Psoas muscle (tissue), 8 donors: ENCODE measurements at regions of chr2 and their contacts with region 1.

Region 1: GRCh38 chr2:48107326-48107925 is 201.1 kb upstream of the FBXO11 start:
- DNase-seq: no peak
- ATAC-seq: no peak
- H3K4me3 ChIP-seq: peak overlapping the region; percentile 35
- H3K27ac ChIP-seq: peak overlapping the region; percentile 36
- H3K4me1 ChIP-seq: peaks cover 6% of the 10 kb centered on the region
- H3K27me3 ChIP-seq: no peaks in the 10 kb centered on the region
- CTCF ChIP-seq: no peak

Region 2: DNA sequence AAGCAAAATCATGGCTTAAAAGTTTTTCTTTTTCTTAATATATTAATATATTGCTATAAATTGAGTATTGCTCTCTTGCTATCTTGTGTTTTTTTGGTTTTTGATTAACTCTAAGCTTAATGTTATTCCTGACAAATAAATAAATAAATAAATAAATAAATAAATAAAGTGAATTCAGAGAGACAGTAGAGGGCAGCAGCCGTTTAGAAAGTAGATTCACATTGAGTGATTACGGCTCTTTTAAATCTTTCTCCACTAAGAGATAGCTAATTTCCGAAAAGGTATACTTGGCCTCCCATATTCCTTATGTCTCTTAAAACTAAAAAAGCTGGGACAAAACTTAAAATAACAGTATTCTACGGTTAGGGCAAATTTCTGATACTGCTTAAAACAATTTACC is 670.1 kb before region 1 on chr2:
- intact Hi-C with region 1: loop called (anchors 2 to 10 kb)
- DNase-seq: no peak
- ATAC-seq: peak in 3 of 4 donors; percentile 47 to 74 (median 48)
- H3K4me3 ChIP-seq: no peak overlapping the region
- H3K27ac ChIP-seq: no peak overlapping the region
- H3K4me1 ChIP-seq: no peaks in the 10 kb centered on the region
- H3K27me3 ChIP-seq: no peaks in the 10 kb centered on the region
- CTCF ChIP-seq: peak; percentile 59

Region 3: DNA sequence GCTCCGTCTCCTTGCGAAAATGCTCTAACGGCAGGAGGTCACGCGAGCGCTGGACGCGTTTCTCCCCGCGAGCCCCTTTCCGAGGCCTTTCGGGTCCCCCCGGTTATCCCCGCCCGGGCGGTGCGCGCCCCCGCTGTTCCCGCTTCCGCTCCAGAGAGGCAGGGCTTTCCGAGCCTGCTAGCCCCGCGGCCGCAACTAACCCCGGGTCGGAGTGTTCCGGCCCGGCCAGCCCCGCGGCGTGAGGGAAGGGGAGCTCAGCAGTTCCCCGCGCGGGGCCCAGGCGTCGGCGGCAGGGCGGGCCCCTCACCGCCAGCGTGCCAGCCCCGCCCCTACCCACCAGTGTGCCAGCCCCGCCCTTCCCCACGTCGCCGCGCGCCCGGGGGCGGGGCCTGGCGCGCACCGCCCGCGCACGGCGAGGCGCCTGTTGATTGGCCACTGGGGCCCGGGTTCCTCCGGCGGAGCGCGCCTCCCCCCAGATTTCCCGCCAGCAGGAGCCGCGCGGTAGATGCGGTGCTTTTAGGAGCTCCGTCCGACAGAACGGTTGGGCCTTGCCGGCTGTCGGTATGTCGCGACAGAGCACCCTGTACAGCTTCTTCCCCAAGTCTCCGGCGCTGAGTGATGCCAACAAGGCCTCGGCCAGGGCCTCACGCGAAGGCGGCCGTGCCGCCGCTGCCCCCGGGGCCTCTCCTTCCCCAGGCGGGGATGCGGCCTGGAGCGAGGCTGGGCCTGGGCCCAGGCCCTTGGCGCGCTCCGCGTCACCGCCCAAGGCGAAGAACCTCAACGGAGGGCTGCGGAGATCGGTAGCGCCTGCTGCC is 324.5 kb before region 1 on chr2 and contains the start of gene MSH6:
- intact Hi-C with region 1: loop called (anchors 5 kb)
- DNase-seq: peak; percentile 90 to 93
- ATAC-seq: peak; percentile 99 to 100 (median 100)
- H3K4me3 ChIP-seq: peak within 1 kb of the TSS; percentile 97
- H3K27ac ChIP-seq: peak within 1 kb of the TSS; percentile 82
- H3K4me1 ChIP-seq: no peaks in the 10 kb centered on the region
- H3K27me3 ChIP-seq: no peaks in the 10 kb centered on the region
- CTCF ChIP-seq: no peak
- total RNA-seq, gene MSH6: 12.0 to 21.1 (median 17.3) TPM

Region 4: GRCh38 chr2:47862949-47863348 is 244.5 kb before region 1 on chr2:
- intact Hi-C with region 1: loop called in 1 of 2 experiments (anchors 2 kb)
- DNase-seq: no peak
- ATAC-seq: no peak
- H3K4me3 ChIP-seq: no peak overlapping the region
- H3K27ac ChIP-seq: no peak overlapping the region
- H3K4me1 ChIP-seq: peaks cover 10% of the 10 kb centered on the region
- H3K27me3 ChIP-seq: no peaks in the 10 kb centered on the region
- CTCF ChIP-seq: no peak

Region 5: DNA sequence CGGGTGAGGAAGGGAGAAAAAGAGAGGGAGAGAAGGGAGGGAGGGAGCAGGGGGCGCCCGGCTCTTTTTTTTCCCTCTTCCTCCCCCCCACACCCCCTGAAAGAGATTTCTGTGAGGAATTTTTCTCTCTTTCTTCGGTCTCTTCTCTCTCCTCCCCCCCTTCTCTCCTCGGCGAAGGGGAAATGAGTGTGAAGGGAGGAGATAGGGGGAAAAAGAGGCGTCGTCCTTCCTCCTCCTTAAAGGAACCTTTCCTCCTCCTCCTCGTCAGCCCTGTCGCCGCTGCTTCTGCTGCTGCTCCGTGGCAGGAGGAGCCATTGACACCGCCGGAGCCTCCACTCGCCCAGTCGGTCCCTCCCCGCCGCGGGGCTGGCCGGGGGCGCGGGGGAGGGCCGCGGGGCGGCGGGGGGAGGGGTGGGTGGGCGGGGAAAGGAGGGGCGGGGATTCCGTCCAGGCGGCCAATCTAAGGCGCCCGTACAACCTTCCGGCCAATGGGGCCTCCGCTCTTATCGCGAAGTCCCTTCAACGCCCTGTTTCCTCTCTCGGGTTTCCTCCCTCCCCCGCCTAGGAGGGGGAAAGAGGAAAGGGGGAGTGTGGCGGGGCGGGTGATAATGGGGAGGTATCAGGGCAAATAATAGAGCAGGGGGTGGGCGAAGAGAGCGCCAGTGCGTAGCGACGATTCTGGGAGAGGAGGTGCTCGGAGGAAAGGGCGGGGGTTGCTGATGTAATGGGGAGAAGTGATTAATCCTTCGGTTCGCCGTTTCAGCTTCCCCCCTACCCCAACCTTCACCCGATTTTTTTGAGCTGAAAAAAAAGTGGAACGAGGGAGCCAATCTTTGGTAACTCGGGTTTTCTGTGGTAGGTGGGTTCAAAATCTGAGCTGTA is 201.0 kb before region 1 on chr2 and contains the start of gene FBXO11:
- intact Hi-C with region 1: loop called in 1 of 2 experiments (anchors 5 kb)
- DNase-seq: peak; percentile 94 to 97
- ATAC-seq: peak; percentile 91 to 95 (median 92)
- H3K4me3 ChIP-seq: peak within 1 kb of the TSS; percentile 98
- H3K27ac ChIP-seq: peak within 1 kb of the TSS; percentile 98
- H3K4me1 ChIP-seq: peaks cover 20% of the 10 kb centered on the region
- H3K27me3 ChIP-seq: no peaks in the 10 kb centered on the region
- CTCF ChIP-seq: peak; percentile 56
- total RNA-seq, gene FBXO11: 31.0 to 39.4 (median 34.9) TPM